HCT116 (cell line): ENCODE measurements at regions of chr5 and their contacts with region 1.

Region 1: GRCh38 chr5:36177715-36178523 is 26.0 kb downstream of the SKP2 start:
- DNase-seq: peak; percentile 7
- ATAC-seq: peak; percentile 82
- H3K4me3 ChIP-seq: no peak overlapping the region
- H3K27ac ChIP-seq: no peak overlapping the region
- H3K4me1 ChIP-seq: no peaks in the 10 kb centered on the region
- H3K27me3 ChIP-seq: no peaks in the 10 kb centered on the region
- CTCF ChIP-seq: peak; percentile 41 to 66 (median 42); a peak in 3 of 6 replicates
- POLR2A ChIP-seq: no peak
- RAD21 ChIP-seq: peak; percentile 55

Region 2: GRCh38 chr5:36151434-36152323 is 26.2 kb before region 1 on chr5 and contains the starts of genes LMBRD2 and SKP2:
- CTCF ChIA-PET with region 1: interaction called, 10 read pairs
- POLR2A ChIA-PET with region 1: no interaction called
- RAD21 ChIA-PET with region 1: no interaction called
- intact Hi-C with region 1: no loop called
- DNase-seq: peak; percentile 92
- ATAC-seq: peak; percentile 98
- H3K4me3 ChIP-seq: peak within 1 kb of the TSS; percentile 73 to 81
- H3K27ac ChIP-seq: peak within 1 kb of the TSS; percentile 27
- H3K4me1 ChIP-seq: peaks cover 6 to 12% of the 10 kb centered on the region in 2 experiments; a peak in 3 of 4 replicates
- H3K27me3 ChIP-seq: no peaks in the 10 kb centered on the region
- CTCF ChIP-seq: no peak
- POLR2A ChIP-seq: peak; percentile 89
- RAD21 ChIP-seq: no peak
- total RNA-seq, gene LMBRD2: 1.1 TPM
- total RNA-seq, gene SKP2: 44.3 TPM

Region 3: DNA sequence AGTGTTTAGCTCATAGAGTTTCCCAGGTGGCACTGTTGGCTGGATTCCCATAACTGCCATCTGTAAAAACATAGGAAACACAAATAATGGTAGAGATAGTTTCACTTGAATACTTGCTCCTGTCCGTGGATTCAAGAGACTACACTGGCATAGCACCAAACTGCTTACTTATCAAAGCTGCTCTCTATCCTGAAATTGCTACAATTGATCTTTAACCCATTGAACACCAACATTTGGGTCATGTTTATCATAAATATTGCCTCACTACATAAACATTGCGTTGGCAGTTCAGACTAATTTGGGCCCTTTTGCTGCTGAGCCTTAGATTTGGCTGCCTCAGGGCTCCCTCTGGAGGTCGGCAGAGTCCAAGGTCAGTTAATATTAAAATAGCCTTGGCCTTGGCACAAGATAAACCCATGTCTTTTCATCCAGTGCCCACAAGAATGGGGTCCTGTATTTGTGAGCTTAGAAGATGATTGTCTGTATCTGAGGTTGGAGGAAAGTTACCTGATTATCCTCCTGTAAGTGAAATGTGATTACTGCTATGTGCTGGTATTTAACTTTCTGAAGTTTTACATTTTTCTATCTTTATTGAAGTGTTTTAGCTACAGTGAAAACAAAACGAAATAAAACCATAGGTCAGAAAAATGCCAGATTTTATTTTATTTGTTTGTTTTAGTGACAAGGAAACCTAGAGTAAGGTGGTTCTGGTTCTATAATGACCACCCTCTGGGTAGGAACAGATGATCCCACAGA is 127.8 kb after region 1 on chr5:
- CTCF ChIA-PET with region 1: interaction called, 5 read pairs
- POLR2A ChIA-PET with region 1: no interaction called
- RAD21 ChIA-PET with region 1: no interaction called
- intact Hi-C with region 1: loop called (anchors 1 kb)
- DNase-seq: peak; percentile 21
- ATAC-seq: peak; percentile 98
- H3K4me3 ChIP-seq: no peak overlapping the region
- H3K27ac ChIP-seq: no peak overlapping the region
- H3K4me1 ChIP-seq: no peaks in the 10 kb centered on the region
- H3K27me3 ChIP-seq: peaks cover 4% of the 10 kb centered on the region; the same call in 1 of the 2 replicates
- CTCF ChIP-seq: peak; percentile 61 to 80 (median 76)
- POLR2A ChIP-seq: no peak
- RAD21 ChIP-seq: peak; percentile 82

Region 4: GRCh38 chr5:36397901-36398536 is 220.1 kb after region 1 on chr5:
- CTCF ChIA-PET with region 1: interaction called, 3 read pairs
- POLR2A ChIA-PET with region 1: no interaction called
- RAD21 ChIA-PET with region 1: no interaction called
- intact Hi-C with region 1: loop called (anchors 2 kb)
- DNase-seq: peak; percentile 28
- ATAC-seq: peak; percentile 74
- H3K4me3 ChIP-seq: no peak overlapping the region
- H3K27ac ChIP-seq: no peak overlapping the region
- H3K4me1 ChIP-seq: no peaks in the 10 kb centered on the region
- H3K27me3 ChIP-seq: no peaks in the 10 kb centered on the region
- CTCF ChIP-seq: peak; percentile 35 to 56 (median 46); a peak in 5 of 6 replicates
- POLR2A ChIP-seq: no peak
- RAD21 ChIP-seq: peak; percentile 67

Region 5: GRCh38 chr5:36777105-36777757 is 599.3 kb after region 1 on chr5:
- CTCF ChIA-PET with region 1: no interaction called
- POLR2A ChIA-PET with region 1: no interaction called
- RAD21 ChIA-PET with region 1: no interaction called
- intact Hi-C with region 1: no loop called
- DNase-seq: peak; percentile 15
- ATAC-seq: peak; percentile 89
- H3K4me3 ChIP-seq: no peak overlapping the region
- H3K27ac ChIP-seq: no peak overlapping the region
- H3K4me1 ChIP-seq: no peaks in the 10 kb centered on the region
- H3K27me3 ChIP-seq: no peaks in the 10 kb centered on the region
- CTCF ChIP-seq: peak; percentile 29 to 43 (median 39); a peak in 4 of 6 replicates
- POLR2A ChIP-seq: no peak
- RAD21 ChIP-seq: peak; percentile 37